ENCODE measurements at regions of chr9 and their contacts with region 1.

Region 1: DNA sequence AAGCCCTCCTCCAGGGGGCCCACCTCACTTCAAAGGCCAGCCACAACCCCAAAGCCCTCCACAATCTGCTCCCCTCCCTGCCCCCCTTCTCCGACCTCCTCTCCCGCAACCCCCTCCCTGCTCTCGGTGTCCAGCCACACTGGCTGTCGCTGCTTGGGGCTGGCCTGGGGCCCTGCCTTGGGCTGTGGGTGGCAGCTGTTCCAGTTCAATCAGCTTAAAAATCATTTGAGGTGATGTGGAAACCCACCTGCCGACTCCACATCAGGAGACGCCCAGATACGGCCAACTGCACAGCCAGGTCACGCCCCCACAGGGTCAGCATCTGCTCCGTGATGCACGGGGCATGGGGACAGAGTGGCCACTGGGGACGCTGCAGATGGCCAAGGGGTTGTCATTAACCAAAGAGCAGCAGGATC is 107.0 kb upstream of the MVB12B start:
- DNase-seq: peak; percentile 59

Region 2: GRCh38 chr9:126009047-126009446 is 210.6 kb before region 1 on chr9:
- intact Hi-C with region 1: loop called in 1 of 2 experiments (anchors 10 kb)
- DNase-seq: no peak

Region 3: GRCh38 chr9:126326228-126327005 is 106.8 kb after region 1 on chr9 and contains the start of gene MVB12B:
- intact Hi-C with region 1: no loop called
- DNase-seq: peak; percentile 84
- total RNA-seq, gene MVB12B: 13.6 to 13.8 TPM

Measured in posterior vena cava (tissue), 2 donors.